ENCODE measurements at regions of chr19 and their contacts with region 1.

Region 1: DNA sequence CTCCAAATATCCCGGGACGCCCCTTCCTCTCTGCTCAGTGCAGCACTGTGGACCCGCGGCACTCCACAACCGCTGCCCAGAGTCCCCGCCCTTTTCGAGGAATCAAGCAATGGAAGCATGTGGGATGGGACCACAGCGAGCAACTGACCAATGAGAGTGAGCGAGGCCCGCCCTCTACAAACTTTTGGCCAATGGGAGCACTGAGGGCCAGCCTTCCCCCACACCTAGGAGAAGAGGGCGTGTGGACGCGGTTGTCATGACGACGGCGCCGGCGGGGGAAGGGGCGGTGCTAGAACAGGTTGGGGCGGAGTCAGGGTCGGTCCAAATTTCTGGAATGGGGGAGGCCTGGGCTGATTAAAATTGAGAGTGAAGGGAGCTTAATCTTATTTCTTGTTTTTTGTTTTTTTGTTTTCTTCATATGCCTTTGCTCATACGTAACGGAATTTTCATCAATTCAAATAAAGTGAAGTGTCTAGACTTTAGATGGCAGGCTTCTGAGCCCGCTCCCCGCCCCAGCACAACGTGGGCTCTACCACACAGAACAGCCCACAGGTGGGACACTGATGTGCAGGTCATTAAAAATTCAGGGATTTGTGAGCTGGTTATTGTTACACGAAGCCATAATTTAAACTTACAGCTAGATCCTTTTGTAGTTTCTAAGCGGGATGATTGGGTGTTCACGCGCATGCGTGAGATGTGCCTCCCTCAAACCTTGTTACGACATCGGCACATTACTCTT is at the start of gene DNAAF3:
- DNase-seq: peak; percentile 97 to 98 (median 97)
- H3K4me3 ChIP-seq: peak within 1 kb of the TSS; percentile 44 to 84 (median 67)
- H3K27ac ChIP-seq: peak within 1 kb of the TSS; percentile 83 to 90
- H3K4me1 ChIP-seq: peaks cover 0 to 16% (median 14%) of the 10 kb centered on the region in 4 experiments
- H3K27me3 ChIP-seq: peaks cover 2 to 40% (median 6%) of the 10 kb centered on the region in 5 experiments

Region 2: GRCh38 chr19:55132453-55133129 is 34.1 kb before region 1 on chr19:
- CTCF ChIA-PET with region 1: no interaction called
- POLR2A ChIA-PET with region 1: no interaction called
- DNase-seq: peak in 2 of 3 donors; percentile 57 to 63
- H3K4me3 ChIP-seq: no peak overlapping the region
- H3K27ac ChIP-seq: no peak overlapping the region
- H3K4me1 ChIP-seq: peaks cover 0 to 7% (median 3%) of the 10 kb centered on the region in 4 experiments
- H3K27me3 ChIP-seq: peaks cover 0 to 4% (median 0%) of the 10 kb centered on the region in 5 experiments

Region 3: DNA sequence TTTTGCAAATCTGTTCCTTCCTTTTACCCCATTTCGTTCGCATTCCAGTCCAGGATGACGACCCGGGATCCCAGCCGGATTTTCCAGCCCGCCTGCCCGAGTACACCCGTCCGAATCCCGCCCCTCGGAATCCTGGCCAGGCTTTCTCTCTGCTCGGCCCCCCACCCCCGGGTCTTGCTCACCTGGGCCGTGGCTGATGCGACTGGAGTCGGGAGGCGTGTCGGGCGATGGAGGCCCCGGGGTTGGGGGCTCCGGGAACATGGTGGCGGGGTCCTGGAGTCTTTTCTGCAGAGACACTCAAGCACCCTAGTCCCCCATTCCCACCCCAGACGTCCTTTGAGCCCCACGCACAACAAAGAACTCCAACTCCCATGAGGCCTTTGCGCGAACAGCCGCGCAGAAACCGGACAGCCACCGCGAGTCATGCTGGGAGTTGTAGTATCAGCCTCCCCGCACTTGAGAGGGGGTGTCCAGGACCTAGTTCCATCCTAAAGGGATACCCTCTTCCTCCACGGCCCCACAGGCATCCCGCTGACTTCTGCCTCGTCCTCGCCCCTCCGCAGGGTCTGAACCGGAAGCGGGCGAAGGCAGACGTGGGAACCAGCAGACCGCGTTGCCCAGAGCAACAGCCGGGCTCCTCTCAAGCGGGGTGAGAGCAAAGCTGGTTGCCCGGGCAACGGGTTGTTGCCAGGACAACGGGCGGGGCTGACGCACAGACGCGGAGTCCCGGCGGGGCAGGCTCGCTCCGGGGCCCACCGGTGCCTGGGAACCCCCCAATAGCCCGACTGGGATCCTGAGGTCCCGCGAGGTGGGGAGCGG is 12.3 kb after region 1 on chr19:
- CTCF ChIA-PET with region 1: interaction called, 31 read pairs
- POLR2A ChIA-PET with region 1: interaction called, 3 read pairs
- DNase-seq: peak; percentile 94 to 97 (median 97)
- H3K4me3 ChIP-seq: peak overlapping the region in 4 of 7 experiments; percentile 32 to 66 (median 50)
- H3K27ac ChIP-seq: no peak overlapping the region
- H3K4me1 ChIP-seq: peaks cover 0 to 30% (median 17%) of the 10 kb centered on the region in 4 experiments
- H3K27me3 ChIP-seq: peaks cover 7 to 66% (median 36%) of the 10 kb centered on the region in 5 experiments

Region 4: DNA sequence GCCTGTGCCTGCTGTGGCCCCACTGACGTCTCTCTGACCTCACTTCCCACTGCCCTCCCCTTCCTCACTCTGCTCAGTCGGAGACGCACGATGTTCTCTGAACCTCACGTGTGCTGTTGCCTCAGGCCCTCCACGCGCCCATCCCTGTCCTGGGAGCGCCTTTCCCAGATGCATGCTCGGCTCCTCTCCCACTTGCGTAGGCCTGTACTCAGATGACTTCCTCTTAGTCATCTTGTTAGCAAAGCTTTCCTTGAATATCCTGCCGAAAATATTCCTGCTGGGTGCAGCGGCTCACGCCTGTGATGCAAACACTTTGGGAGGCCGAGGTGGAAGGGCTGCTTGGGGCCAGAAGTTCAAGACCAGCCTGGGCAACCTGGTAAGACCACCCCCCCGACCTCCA is 22.7 kb after region 1 on chr19:
- CTCF ChIA-PET with region 1: no interaction called
- POLR2A ChIA-PET with region 1: no interaction called
- DNase-seq: no peak
- H3K4me3 ChIP-seq: no peak overlapping the region
- H3K27ac ChIP-seq: no peak overlapping the region
- H3K4me1 ChIP-seq: peaks cover 0 to 16% (median 8%) of the 10 kb centered on the region in 4 experiments
- H3K27me3 ChIP-seq: peaks cover 0 to 2% (median 0%) of the 10 kb centered on the region in 5 experiments

Region 5: DNA sequence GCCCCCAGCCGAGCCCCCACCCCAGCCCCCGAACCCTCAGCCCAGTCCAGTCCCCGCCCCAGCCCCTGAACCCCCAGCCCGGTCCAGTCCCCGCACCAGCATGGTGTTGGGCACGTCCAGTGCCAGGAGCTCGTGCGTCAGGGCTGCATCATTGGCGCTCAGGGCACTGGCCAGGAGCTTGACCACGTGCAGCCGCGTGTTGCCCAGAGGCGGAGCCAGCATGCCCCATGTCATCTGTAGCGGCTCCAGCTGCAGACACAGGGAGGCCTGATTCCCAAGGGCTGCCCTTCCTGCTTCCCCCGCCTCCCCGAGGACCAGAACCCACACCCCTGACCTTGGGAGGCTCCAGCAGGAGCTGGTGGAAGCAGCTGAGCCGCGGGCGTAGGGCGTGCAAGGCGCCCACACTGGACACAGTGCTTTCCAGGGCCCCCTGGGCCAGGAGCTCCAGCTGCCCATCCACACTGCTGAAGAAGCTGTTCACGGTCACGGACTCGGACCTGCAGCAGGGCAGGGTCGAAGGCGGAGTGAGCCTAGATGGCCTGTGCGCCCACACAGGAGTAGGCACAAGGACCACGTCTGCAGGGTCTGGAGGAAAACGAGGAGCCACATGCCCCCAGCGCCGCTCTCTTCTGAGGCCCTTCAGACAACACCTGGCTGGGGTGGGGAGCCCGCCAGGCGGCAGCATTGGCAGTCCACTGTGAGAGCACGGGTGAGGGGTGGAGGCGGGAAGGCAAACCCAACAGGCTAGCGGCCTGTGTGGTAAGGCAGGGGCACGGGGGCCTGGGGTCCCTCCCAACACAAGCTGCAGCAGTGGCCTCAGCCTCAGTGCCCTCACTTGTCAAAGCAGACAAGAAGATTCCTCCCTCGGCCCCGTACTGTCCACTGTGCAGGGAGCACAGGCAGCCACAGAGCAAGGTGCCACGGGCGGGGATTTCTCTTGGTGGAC is 74.7 kb after region 1 on chr19:
- CTCF ChIA-PET with region 1: no interaction called
- POLR2A ChIA-PET with region 1: no interaction called
- DNase-seq: no peak
- H3K4me3 ChIP-seq: no peak overlapping the region
- H3K27ac ChIP-seq: no peak overlapping the region
- H3K4me1 ChIP-seq: peaks cover 0 to under 1% (median under 1%) of the 10 kb centered on the region in 4 experiments
- H3K27me3 ChIP-seq: no peaks in the 10 kb centered on the region